ENCODE measurements at regions of chr3 and their contacts with region 1.

Region 1: DNA sequence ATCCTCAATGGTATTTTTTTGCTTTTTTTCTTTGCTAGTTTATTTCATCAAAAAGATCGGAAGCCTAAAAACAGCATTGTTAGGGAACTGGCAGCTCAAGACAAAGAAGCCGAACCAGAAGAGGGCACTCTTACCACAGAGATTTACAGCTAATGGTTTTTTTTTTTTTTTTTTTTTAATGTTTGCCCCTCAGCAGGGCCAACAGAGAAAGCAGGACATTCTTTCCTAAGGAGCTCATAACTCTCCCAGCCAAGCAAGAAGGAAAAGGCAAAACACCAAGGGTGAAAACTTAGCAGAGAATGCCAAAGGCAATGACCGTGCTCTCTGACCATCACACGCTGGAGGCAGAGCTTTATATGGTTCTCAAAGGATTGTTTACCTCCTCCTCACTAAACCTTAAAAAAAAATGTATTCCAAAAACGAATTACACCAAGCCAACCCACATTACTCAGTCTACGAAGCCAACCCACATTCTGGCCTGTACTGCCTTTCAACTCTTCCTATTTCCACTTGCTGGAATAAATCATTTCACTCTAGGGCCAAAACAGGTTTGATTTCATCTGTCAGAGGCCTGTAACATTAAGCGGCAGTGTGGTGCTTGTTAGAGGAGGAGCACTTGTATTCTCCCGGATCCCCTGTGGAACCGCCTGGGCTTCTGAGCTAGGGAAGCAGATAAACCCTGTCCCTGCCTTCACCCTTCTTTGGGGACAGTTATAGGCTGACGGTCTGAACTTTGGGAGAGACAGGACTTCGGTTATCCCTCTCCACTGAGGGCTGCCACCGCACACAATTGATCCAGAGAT is 35.6 kb upstream of the GYG1 start:
- DNase-seq: peak; percentile 90
- H3K4me3 ChIP-seq: no peak overlapping the region
- H3K27ac ChIP-seq: peak overlapping the region; percentile 79 to 94 (median 92)
- H3K4me1 ChIP-seq: peaks cover 0 to 55% (median 35%) of the 10 kb centered on the region in 4 donors
- H3K27me3 ChIP-seq: no peaks in the 10 kb centered on the region
- CTCF ChIP-seq: peak; percentile 42 to 63 (median 50)
- EP300 ChIP-seq: peak in 3 of 4 donors; percentile 36 to 44 (median 37)
- POLR2A ChIP-seq: peak in 1 of 2 donors; percentile 37

Region 2: GRCh38 chr3:148757238-148758215 is 198.2 kb before region 1 on chr3:
- intact Hi-C with region 1: no loop called
- DNase-seq: no peak
- H3K4me3 ChIP-seq: no peak overlapping the region
- H3K27ac ChIP-seq: no peak overlapping the region
- H3K4me1 ChIP-seq: no peaks in the 10 kb centered on the region
- H3K27me3 ChIP-seq: no peaks in the 10 kb centered on the region
- CTCF ChIP-seq: no peak
- EP300 ChIP-seq: no peak
- POLR2A ChIP-seq: no peak

Region 3: GRCh38 chr3:148974726-148975125 is 19.0 kb after region 1 on chr3:
- intact Hi-C with region 1: loop called (anchors 2 kb)
- DNase-seq: no peak
- H3K4me3 ChIP-seq: no peak overlapping the region
- H3K27ac ChIP-seq: peak overlapping the region; percentile 48 to 73 (median 68)
- H3K4me1 ChIP-seq: peaks cover 0 to 29% (median 20%) of the 10 kb centered on the region in 4 donors
- H3K27me3 ChIP-seq: no peaks in the 10 kb centered on the region
- CTCF ChIP-seq: no peak
- EP300 ChIP-seq: no peak
- POLR2A ChIP-seq: no peak

Region 4: GRCh38 chr3:149038322-149038721 is 82.6 kb after region 1 on chr3:
- intact Hi-C with region 1: loop called (anchors 5 kb)
- DNase-seq: no peak
- H3K4me3 ChIP-seq: no peak overlapping the region
- H3K27ac ChIP-seq: peak overlapping the region in 3 of 4 donors; percentile 63 to 71 (median 67)
- H3K4me1 ChIP-seq: peaks cover 0 to 25% (median 20%) of the 10 kb centered on the region in 4 donors
- H3K27me3 ChIP-seq: no peaks in the 10 kb centered on the region
- CTCF ChIP-seq: no peak
- EP300 ChIP-seq: no peak
- POLR2A ChIP-seq: no peak

Region 5: GRCh38 chr3:149129326-149130205 is 173.8 kb after region 1 on chr3 and contains the start of gene HPS3:
- intact Hi-C with region 1: loop called (anchors 5 kb)
- DNase-seq: peak; percentile 95
- H3K4me3 ChIP-seq: peak within 1 kb of the TSS; percentile 61 to 99 (median 89)
- H3K27ac ChIP-seq: peak within 1 kb of the TSS; percentile 77 to 93 (median 86)
- H3K4me1 ChIP-seq: peaks cover 0 to 44% (median 31%) of the 10 kb centered on the region in 4 donors
- H3K27me3 ChIP-seq: no peaks in the 10 kb centered on the region
- CTCF ChIP-seq: no peak
- EP300 ChIP-seq: no peak
- POLR2A ChIP-seq: peak; percentile 82 to 87
- total RNA-seq, gene HPS3: 14.8 to 25.3 (median 16.4) TPM

Region 6: GRCh38 chr3:149536429-149536828 is 580.7 kb after region 1 on chr3:
- intact Hi-C with region 1: loop called (anchors 10 kb)
- DNase-seq: peak; percentile 74
- H3K4me3 ChIP-seq: no peak overlapping the region
- H3K27ac ChIP-seq: peak overlapping the region; percentile 73 to 78 (median 76)
- H3K4me1 ChIP-seq: peaks cover 0 to 89% (median 73%) of the 10 kb centered on the region in 4 donors
- H3K27me3 ChIP-seq: no peaks in the 10 kb centered on the region
- CTCF ChIP-seq: no peak
- EP300 ChIP-seq: no peak
- POLR2A ChIP-seq: no peak

Region 7: DNA sequence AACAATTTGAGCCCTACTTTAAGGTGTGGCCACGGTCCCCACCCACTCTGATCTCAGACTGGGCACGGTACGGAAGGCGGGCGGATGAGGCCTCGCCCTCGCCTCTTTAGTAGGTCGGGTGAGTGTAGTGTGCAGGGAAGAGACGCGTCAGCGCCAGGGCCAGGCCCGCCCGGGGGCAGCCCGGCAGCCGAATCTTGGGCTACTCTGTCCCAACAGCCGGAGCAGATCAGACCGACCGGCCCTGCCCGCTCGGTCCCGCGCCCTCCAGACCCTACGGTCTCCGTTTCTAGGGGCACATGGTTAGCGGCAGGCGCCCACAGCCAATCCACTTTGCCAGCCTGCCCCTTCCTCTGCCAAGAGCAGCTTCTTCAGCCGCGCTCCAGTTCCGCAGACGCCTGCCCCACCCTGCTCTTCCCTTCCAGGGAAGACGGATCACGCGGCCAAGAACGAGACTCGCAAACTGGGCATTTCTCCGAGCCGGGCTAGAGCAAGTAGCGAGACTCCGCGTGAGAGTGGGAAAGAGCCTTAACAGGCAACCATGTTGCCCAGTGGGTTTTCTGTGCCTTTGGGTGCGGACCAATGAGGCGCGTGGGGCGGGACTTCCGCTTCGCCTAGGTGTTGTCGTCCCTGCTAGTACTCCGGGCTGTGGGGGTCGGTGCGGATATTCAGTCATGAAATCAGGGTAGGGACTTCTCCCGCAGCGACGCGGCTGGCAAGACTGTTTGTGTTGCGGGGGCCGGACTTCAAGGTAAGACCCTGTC is 857.0 kb after region 1 on chr3 and contains the start of gene RNF13:
- intact Hi-C with region 1: loop called (anchors 5 kb)
- DNase-seq: peak; percentile 99
- H3K4me3 ChIP-seq: peak within 1 kb of the TSS; percentile 66 to 75 (median 70)
- H3K27ac ChIP-seq: peak within 1 kb of the TSS; percentile 97 to 99 (median 97)
- H3K4me1 ChIP-seq: peaks cover 0 to 57% (median 45%) of the 10 kb centered on the region in 4 donors
- H3K27me3 ChIP-seq: no peaks in the 10 kb centered on the region
- CTCF ChIP-seq: no peak
- EP300 ChIP-seq: peak in 1 of 4 donors; percentile 47
- POLR2A ChIP-seq: peak; percentile 59 to 61
- total RNA-seq, gene RNF13: 78.3 to 110 (median 94.1) TPM

Measured in sigmoid colon (tissue), 7 donors.